ENCODE measurements at regions of chr17 and their contacts with region 1.

Region 1: DNA sequence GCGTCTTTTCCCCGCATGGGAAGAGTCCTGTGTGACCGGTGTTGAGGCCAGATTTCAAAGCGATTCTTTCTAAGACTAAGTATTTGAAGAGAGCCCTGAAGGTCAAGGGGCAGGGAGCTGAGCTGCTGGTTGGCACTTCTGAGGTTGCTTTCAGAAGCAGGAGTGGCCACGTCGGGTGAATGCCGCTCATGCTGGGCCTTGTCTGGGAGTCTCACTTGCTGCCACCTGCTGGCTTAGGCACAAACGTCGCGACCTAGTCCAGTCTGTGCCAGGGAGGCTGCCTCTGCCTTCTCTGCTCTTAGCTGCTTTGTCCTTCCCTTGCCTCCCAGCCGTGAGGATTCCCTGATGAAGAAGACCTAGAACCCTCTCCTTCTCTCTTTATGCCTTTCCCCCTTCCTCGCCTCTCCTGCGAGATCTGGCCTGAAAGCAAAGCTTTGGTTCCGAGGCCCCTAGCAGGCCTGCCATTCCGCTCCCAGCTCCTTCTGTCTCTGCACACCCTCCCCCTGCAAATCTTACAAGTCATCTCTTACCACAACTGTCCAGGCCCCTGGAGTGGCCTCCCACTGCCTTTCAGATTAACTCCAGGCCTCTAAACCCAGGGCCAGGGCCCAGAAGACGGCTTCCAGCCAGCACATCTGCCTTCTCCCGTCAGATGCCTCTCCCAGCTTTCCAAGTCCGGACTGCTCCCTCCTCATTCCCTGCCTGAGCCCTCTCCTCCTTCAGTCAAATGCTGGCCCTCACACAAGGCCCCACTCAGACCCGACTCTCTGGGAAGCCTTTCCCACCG is 11.4 kb downstream of the CTNS start:
- DNase-seq: peak; percentile 83
- H3K4me3 Mint-ChIP-seq: no peak overlapping the region
- H3K27ac Mint-ChIP-seq: peak overlapping the region; percentile 11
- H3K4me1 Mint-ChIP-seq: peaks cover 19% of the 10 kb centered on the region
- H3K27me3 Mint-ChIP-seq: no peaks in the 10 kb centered on the region

Region 2: GRCh38 chr17:3602499-3602898 is 45.5 kb before region 1 on chr17:
- intact Hi-C with region 1: loop called (anchors 2 kb)
- DNase-seq: peak; percentile 75
- H3K4me3 Mint-ChIP-seq: no peak overlapping the region
- H3K27ac Mint-ChIP-seq: no peak overlapping the region
- H3K4me1 Mint-ChIP-seq: no peaks in the 10 kb centered on the region
- H3K27me3 Mint-ChIP-seq: no peaks in the 10 kb centered on the region

Region 3: GRCh38 chr17:3827124-3827773 is 179.3 kb after region 1 on chr17:
- intact Hi-C with region 1: no loop called
- DNase-seq: peak; percentile 91
- H3K4me3 Mint-ChIP-seq: no peak overlapping the region
- H3K27ac Mint-ChIP-seq: no peak overlapping the region
- H3K4me1 Mint-ChIP-seq: peaks cover 11% of the 10 kb centered on the region
- H3K27me3 Mint-ChIP-seq: no peaks in the 10 kb centered on the region